Common myeloid progenitor, CD34-positive (primary cell): ENCODE measurements at regions of chr1 and their contacts with region 1.

Region 1: GRCh38 chr1:156797212-156797871 is 19.3 kb downstream of the SH2D2A start:
- DNase-seq: peak; percentile 68 to 77 (median 76)
- H3K4me3 ChIP-seq: no peak overlapping the region
- H3K27ac ChIP-seq: no peak overlapping the region
- H3K4me1 ChIP-seq: peaks cover 0 to 7% (median 5%) of the 10 kb centered on the region in 4 experiments
- H3K27me3 ChIP-seq: no peaks in the 10 kb centered on the region

Region 2: GRCh38 chr1:156709743-156710489 is 87.4 kb before region 1 on chr1:
- CTCF ChIA-PET with region 1: no interaction called
- POLR2A ChIA-PET with region 1: no interaction called
- DNase-seq: no peak
- H3K4me3 ChIP-seq: no peak overlapping the region
- H3K27ac ChIP-seq: no peak overlapping the region
- H3K4me1 ChIP-seq: peaks cover 0 to 21% (median 19%) of the 10 kb centered on the region in 4 experiments
- H3K27me3 ChIP-seq: peaks cover 0 to 43% (median 13%) of the 10 kb centered on the region in 5 experiments

Region 3: GRCh38 chr1:156781585-156782186 is 15.7 kb before region 1 on chr1:
- CTCF ChIA-PET with region 1: interaction called, 20 read pairs
- POLR2A ChIA-PET with region 1: no interaction called
- DNase-seq: no peak
- H3K4me3 ChIP-seq: no peak overlapping the region
- H3K27ac ChIP-seq: no peak overlapping the region
- H3K4me1 ChIP-seq: peaks cover 11 to 34% (median 17%) of the 10 kb centered on the region in 4 experiments
- H3K27me3 ChIP-seq: no peaks in the 10 kb centered on the region

Region 4: DNA sequence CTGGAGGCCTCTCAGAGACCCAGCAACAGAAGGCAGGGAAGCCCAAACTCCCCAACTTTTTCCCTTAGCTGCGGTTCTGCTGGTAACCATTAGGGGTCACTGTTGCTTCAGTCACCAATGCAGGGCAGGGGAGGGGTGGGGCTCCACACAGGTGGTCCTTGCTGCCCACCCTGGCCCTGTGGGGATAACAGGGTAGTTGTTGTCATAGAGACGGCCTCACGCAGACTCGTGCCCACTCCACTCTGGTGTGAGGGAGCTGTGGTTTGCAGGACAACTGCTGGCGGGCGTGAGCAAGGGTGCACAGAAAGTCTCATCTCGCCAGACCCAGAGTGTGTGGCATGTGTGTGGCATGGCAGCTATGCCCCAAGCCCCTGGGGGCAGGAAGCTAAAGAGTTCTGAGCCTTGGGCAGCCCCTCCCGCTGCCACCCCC is 41.7 kb after region 1 on chr1:
- CTCF ChIA-PET with region 1: interaction called, 17 read pairs
- POLR2A ChIA-PET with region 1: no interaction called
- DNase-seq: peak in 2 of 3 donors; percentile 59 to 68
- H3K4me3 ChIP-seq: no peak overlapping the region
- H3K27ac ChIP-seq: no peak overlapping the region
- H3K4me1 ChIP-seq: no peaks in the 10 kb centered on the region
- H3K27me3 ChIP-seq: peaks cover 0 to 42% (median 26%) of the 10 kb centered on the region in 5 experiments

Region 5: DNA sequence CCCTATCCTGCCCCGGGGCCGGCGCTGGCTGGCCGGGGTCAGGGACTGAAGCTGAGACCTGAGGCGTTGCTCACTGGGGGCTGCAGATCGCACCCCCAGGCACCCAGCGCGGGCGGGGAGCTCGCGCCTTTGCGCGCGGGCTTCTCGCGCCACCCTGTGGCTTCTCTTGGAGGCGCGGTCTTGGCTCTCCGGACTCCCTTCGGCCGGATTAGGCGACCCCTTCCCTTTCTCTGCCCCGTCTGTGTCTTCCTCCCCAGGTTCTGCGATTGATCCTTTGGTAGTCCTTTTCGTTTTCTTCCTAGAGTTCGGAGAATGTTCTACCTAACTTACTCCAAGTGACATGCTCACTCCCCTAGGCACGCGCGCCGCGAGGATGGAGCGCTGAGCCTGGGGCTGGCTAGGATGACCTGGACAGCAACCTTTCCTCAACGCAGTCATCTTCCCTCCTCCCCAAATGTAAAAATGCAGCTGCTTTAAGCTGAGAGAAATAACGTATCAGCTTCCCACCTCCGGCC is 62.8 kb after region 1 on chr1:
- CTCF ChIA-PET with region 1: interaction called, 282 read pairs
- POLR2A ChIA-PET with region 1: no interaction called
- DNase-seq: peak; percentile 31 to 61 (median 57)
- H3K4me3 ChIP-seq: peak overlapping the region; percentile 22 to 69 (median 54)
- H3K27ac ChIP-seq: no peak overlapping the region
- H3K4me1 ChIP-seq: peaks cover 2 to 43% (median 39%) of the 10 kb centered on the region in 4 experiments
- H3K27me3 ChIP-seq: peaks cover 0 to 78% (median 47%) of the 10 kb centered on the region in 5 experiments

Region 6: DNA sequence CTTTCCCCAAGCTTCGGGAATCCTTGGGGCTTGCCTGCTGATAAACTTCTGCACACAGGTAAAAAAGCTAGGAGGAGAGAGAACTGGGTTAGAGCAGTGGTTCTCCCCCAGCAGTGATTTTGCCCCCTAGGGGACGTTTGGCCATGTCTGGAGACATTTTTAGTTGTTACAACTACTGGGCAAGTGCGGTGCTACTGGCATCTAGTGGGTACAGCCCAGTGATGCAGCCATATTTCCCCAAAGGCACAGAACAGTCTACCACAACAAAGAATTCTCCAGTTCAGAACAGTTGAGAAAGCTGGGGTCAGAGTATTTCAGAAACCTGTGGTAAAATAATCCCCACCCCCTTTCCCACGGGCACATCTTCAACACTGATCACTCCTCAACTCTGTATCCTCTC is 164.4 kb after region 1 on chr1:
- CTCF ChIA-PET with region 1: no interaction called
- POLR2A ChIA-PET with region 1: no interaction called
- DNase-seq: peak; percentile 30 to 52 (median 44)
- H3K4me3 ChIP-seq: no peak overlapping the region
- H3K27ac ChIP-seq: no peak overlapping the region
- H3K4me1 ChIP-seq: peaks cover 0 to 38% (median 21%) of the 10 kb centered on the region in 4 experiments
- H3K27me3 ChIP-seq: no peaks in the 10 kb centered on the region